Activated T-helper 2 cell treated with anti-CD3 and anti-CD28 coated beads, Interferon-gamma antibody, Interleukin-2, Interleukin-4, amounts not matched to agents 10 μg/mL and 5 μg/mL and 100 μg/mL, durations not matched to agents 14 hours and 24 hours and 36 hours (primary cell): ENCODE measurements at regions of chr9 and their contacts with region 1.

Region 1: GRCh38 chr9:72443855-72444254 is 77.6 kb upstream of the TMC1 start:
- DNase-seq: peak; percentile 14
- H3K4me3 Mint-ChIP-seq: no peak overlapping the region
- H3K27ac Mint-ChIP-seq: peak overlapping the region; percentile 68
- H3K4me1 Mint-ChIP-seq: peaks cover 33% of the 10 kb centered on the region
- H3K27me3 Mint-ChIP-seq: peaks cover 12% of the 10 kb centered on the region

Region 2: GRCh38 chr9:72254901-72255535 is 188.8 kb before region 1 on chr9:
- intact Hi-C with region 1: no loop called
- DNase-seq: no peak
- H3K4me3 Mint-ChIP-seq: no peak overlapping the region
- H3K27ac Mint-ChIP-seq: no peak overlapping the region
- H3K4me1 Mint-ChIP-seq: no peaks in the 10 kb centered on the region
- H3K27me3 Mint-ChIP-seq: peaks cover 17% of the 10 kb centered on the region

Region 3: DNA sequence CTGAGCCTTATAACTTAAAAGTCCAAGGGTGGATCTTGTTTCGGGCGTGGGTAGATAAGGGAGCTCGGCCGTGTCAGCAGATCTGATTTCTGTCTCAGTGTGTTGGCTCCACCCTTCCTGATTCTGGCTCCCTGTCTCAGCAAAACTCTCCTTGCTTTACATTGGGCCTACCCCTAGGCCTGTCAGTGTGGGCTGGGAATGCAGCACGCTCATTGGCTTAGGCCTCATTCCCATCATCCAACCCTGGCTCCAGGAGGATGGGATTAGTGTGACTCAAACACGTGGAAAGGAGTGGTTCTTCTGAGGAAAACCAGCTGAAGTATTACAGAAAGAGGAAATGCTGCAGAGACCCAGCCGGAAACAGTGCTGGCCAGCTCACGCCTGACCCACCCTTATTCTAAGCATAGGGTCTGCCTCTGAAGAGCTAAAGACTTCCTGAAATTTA is 138.7 kb before region 1 on chr9:
- intact Hi-C with region 1: loop called (anchors 10 kb)
- DNase-seq: peak; percentile 8
- H3K4me3 Mint-ChIP-seq: no peak overlapping the region
- H3K27ac Mint-ChIP-seq: no peak overlapping the region
- H3K4me1 Mint-ChIP-seq: peaks cover 21% of the 10 kb centered on the region
- H3K27me3 Mint-ChIP-seq: peaks cover 5% of the 10 kb centered on the region

Region 4: DNA sequence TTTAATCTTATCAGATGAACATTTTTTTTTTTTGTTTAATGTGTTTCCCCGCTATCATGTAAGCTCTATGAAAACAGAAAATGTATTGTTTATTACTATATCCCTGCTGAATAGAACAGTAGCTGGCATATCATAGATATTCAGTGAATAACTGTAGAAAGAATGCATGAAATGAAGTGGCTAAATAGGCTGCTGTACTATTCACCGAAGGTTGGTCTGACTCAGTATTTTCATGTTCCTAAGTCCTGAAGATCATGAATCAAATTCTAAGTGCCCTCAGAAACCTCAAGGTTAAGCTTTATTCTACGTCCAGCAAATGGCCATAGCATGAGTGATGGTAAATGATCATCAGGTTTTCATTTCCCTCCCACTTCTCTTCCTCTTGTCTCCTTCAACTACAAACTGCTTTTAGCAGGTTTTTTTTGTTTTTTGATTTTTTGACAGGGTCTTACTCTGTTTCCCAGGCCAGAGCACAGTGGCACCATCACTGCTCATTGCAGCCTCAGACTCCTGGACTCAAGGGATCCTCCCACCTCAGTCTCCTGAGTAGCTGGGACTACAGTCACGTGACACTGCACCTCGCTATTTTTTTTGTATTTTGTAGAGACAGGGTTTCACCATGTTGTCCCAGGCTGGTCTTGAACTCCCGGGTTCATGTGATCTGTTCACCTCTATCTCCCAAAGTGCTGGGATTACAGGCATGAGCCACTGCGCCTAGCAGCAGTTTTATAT is 59.7 kb before region 1 on chr9:
- intact Hi-C with region 1: loop called (anchors 1 kb)
- DNase-seq: no peak
- H3K4me3 Mint-ChIP-seq: no peak overlapping the region
- H3K27ac Mint-ChIP-seq: no peak overlapping the region
- H3K4me1 Mint-ChIP-seq: peaks cover 7% of the 10 kb centered on the region
- H3K27me3 Mint-ChIP-seq: peaks cover 4% of the 10 kb centered on the region

Region 5: DNA sequence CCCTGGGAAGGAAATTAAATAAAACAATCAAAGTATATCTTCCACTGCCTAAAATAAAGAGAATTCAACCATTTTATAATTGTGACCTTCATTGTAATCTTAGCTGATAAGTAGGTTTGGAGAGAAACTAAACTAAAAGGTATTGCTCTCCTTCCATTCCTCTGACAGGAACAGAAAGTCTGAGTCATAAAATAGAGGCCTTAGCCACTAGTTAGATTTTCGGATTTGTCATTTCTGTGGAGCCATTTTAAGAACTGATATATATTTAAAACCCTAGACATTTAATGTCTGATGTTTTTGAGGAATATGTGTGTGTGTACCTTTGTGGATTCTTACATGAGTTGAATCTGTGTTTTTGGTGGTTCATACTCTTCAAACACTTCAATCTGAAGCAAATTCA is 65.8 kb after region 1 on chr9:
- intact Hi-C with region 1: loop called (anchors 5 kb)
- DNase-seq: no peak
- H3K4me3 Mint-ChIP-seq: peak overlapping the region; percentile 23
- H3K27ac Mint-ChIP-seq: peak overlapping the region; percentile 80
- H3K4me1 Mint-ChIP-seq: peaks cover 20% of the 10 kb centered on the region
- H3K27me3 Mint-ChIP-seq: no peaks in the 10 kb centered on the region

Region 6: GRCh38 chr9:72557549-72557948 is 113.7 kb after region 1 on chr9:
- intact Hi-C with region 1: loop called (anchors 1 kb)
- DNase-seq: peak; percentile 9
- H3K4me3 Mint-ChIP-seq: no peak overlapping the region
- H3K27ac Mint-ChIP-seq: peak overlapping the region; percentile 69
- H3K4me1 Mint-ChIP-seq: peaks cover 17% of the 10 kb centered on the region
- H3K27me3 Mint-ChIP-seq: peaks cover 3% of the 10 kb centered on the region

Region 7: GRCh38 chr9:72635197-72635596 is 191.3 kb after region 1 on chr9:
- intact Hi-C with region 1: loop called (anchors 1 kb)
- DNase-seq: no peak
- H3K4me3 Mint-ChIP-seq: no peak overlapping the region
- H3K27ac Mint-ChIP-seq: no peak overlapping the region
- H3K4me1 Mint-ChIP-seq: peaks cover 15% of the 10 kb centered on the region
- H3K27me3 Mint-ChIP-seq: peaks cover 5% of the 10 kb centered on the region